Ovary (tissue), 10 donors: ENCODE measurements at regions of chr5 and their contacts with region 1.

Region 1: DNA sequence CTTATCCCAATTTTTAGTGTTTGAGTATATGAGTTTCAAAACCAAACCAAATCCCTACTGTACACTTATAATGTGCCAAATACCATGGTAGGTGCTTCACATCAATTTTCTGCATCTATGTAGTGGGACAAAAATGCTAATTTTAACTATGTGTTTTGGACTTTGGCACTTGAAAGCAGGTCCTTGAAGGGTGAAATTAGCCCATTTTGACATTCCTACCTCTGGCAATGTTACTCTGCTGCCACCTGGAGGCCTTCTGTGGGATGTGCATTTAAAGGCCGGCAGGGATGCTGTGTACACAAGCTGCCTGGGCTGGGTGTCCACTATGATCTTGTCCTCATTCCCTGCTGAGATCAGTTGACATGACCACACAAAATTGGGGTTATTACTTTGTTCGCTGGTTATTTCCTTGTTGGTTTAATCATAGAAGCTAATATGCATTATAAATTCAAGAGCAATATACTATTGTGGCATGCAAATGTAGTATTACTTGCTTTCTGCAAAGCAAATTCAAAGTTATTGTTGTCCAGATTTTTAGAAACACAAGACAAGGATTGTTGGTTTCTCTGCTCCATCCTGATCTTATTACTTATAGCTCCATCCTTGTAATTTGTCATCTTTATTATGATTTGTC is 166.8 kb downstream of the ARHGEF28 start:
- DNase-seq: peak; percentile 65 to 86 (median 83)
- H3K4me3 ChIP-seq: no peak overlapping the region
- H3K27ac ChIP-seq: no peak overlapping the region
- H3K4me1 ChIP-seq: peaks cover 9% of the 10 kb centered on the region
- H3K27me3 ChIP-seq: no peaks in the 10 kb centered on the region
- CTCF ChIP-seq: peak; percentile 89 to 96 (median 96)
- EP300 ChIP-seq: no peak
- POLR2A ChIP-seq: no peak

Region 2: DNA sequence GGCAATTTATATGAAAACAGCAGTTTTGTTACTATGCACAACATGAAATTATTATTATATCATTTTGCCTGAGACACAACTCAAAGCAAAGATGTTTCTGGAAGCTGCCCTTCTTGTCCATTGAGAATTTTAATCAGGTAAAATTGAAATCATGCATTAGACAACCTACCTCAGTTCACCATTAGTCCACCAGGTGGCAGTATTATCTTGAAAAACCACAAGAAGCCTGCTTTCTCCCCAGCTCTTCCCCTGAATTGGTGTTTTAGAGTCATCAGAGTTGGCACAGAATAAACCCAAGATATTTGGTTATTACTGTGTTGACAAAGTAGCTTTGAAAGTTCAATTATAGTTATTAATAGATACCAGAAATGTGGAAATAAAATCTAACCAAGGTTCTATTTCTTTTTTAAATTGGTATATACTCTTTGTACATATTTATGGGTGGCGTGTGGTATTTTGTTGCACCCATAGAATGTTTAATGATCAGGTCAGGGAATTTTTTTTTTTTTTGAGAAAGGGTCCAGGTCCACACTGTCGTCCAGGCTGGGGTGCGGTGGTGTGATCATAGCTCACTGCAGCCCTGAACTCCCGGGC is 201.6 kb before region 1 on chr5:
- intact Hi-C with region 1: loop called (anchors 2 to 5 kb)
- DNase-seq: peak in 2 of 5 donors; percentile 27 to 60
- H3K4me3 ChIP-seq: no peak overlapping the region
- H3K27ac ChIP-seq: no peak overlapping the region
- H3K4me1 ChIP-seq: peaks cover 3% of the 10 kb centered on the region
- H3K27me3 ChIP-seq: no peaks in the 10 kb centered on the region
- CTCF ChIP-seq: peak; percentile 91 to 95 (median 95)
- EP300 ChIP-seq: no peak
- POLR2A ChIP-seq: no peak

Region 3: GRCh38 chr5:74173251-74173650 is 380.4 kb after region 1 on chr5:
- intact Hi-C with region 1: no loop called
- DNase-seq: no peak
- H3K4me3 ChIP-seq: no peak overlapping the region
- H3K27ac ChIP-seq: no peak overlapping the region
- H3K4me1 ChIP-seq: peaks cover 8% of the 10 kb centered on the region
- H3K27me3 ChIP-seq: no peaks in the 10 kb centered on the region
- CTCF ChIP-seq: no peak
- EP300 ChIP-seq: no peak
- POLR2A ChIP-seq: no peak